Activated CD4-positive, alpha-beta T cell treated with anti-CD3 and anti-CD28 coated beads, Interleukin-2, amount 10 ng/mL, durations not matched to agents 24 days and 14 days (primary cell): ENCODE measurements at regions of chr4 and their contacts with region 1.

Region 1: GRCh38 chr4:101282076-101282844 is 65.1 kb downstream of the PPP3CA start:
- DNase-seq: peak; percentile 75
- H3K4me3 Mint-ChIP-seq: no peak overlapping the region
- H3K27ac Mint-ChIP-seq: no peak overlapping the region
- H3K4me1 Mint-ChIP-seq: peaks cover 28% of the 10 kb centered on the region
- H3K27me3 Mint-ChIP-seq: no peaks in the 10 kb centered on the region

Region 2: GRCh38 chr4:101205916-101206315 is 76.3 kb before region 1 on chr4:
- intact Hi-C with region 1: loop called (anchors 5 kb)
- DNase-seq: peak; percentile 86
- H3K4me3 Mint-ChIP-seq: peak overlapping the region; percentile 13
- H3K27ac Mint-ChIP-seq: peak overlapping the region; percentile 50
- H3K4me1 Mint-ChIP-seq: peaks cover 23% of the 10 kb centered on the region
- H3K27me3 Mint-ChIP-seq: peaks cover 3% of the 10 kb centered on the region